Natural killer cell (primary cell): ENCODE measurements at regions of chr7 and their contacts with region 1.

Region 1: GRCh38 chr7:112449902-112450806 is at the start of gene IFRD1:
- DNase-seq: peak; percentile 97 to 99
- ATAC-seq: peak; percentile 81 to 94 (median 84)
- H3K4me3 ChIP-seq: peak within 1 kb of the TSS; percentile 90
- H3K4me3 Mint-ChIP-seq: peak within 1 kb of the TSS; percentile 99
- H3K27ac ChIP-seq: peak within 1 kb of the TSS; percentile 97
- H3K27ac Mint-ChIP-seq: peak within 1 kb of the TSS; percentile 99
- H3K4me1 ChIP-seq: peaks cover 17% of the 10 kb centered on the region
- H3K4me1 Mint-ChIP-seq: peaks cover 36 to 38% of the 10 kb centered on the region in 2 donors
- H3K27me3 ChIP-seq: no peaks in the 10 kb centered on the region
- H3K27me3 Mint-ChIP-seq: no peaks in the 10 kb centered on the region
- CTCF ChIP-seq: no peak
- total RNA-seq, gene IFRD1: 244 to 278 (median 261) TPM

Region 2: GRCh38 chr7:111561885-111562732 is 888.0 kb before region 1 on chr7 and contains the start of gene IMMP2L:
- intact Hi-C with region 1: loop called (anchors 5 kb)
- DNase-seq: peak; percentile 94 to 95
- ATAC-seq: peak; percentile 96 to 98 (median 96)
- H3K4me3 ChIP-seq: peak within 1 kb of the TSS; percentile 69
- H3K4me3 Mint-ChIP-seq: peak within 1 kb of the TSS; percentile 94
- H3K27ac ChIP-seq: peak within 1 kb of the TSS; percentile 80
- H3K27ac Mint-ChIP-seq: peak within 1 kb of the TSS; percentile 89 to 93
- H3K4me1 ChIP-seq: peaks cover 13% of the 10 kb centered on the region
- H3K4me1 Mint-ChIP-seq: peaks cover 5 to 23% of the 10 kb centered on the region in 2 donors
- H3K27me3 ChIP-seq: no peaks in the 10 kb centered on the region
- H3K27me3 Mint-ChIP-seq: peaks cover 11 to 23% of the 10 kb centered on the region in 2 donors
- CTCF ChIP-seq: peak; percentile 16
- total RNA-seq, gene IMMP2L: 6.9 to 9.2 (median 8.7) TPM

Region 3: DNA sequence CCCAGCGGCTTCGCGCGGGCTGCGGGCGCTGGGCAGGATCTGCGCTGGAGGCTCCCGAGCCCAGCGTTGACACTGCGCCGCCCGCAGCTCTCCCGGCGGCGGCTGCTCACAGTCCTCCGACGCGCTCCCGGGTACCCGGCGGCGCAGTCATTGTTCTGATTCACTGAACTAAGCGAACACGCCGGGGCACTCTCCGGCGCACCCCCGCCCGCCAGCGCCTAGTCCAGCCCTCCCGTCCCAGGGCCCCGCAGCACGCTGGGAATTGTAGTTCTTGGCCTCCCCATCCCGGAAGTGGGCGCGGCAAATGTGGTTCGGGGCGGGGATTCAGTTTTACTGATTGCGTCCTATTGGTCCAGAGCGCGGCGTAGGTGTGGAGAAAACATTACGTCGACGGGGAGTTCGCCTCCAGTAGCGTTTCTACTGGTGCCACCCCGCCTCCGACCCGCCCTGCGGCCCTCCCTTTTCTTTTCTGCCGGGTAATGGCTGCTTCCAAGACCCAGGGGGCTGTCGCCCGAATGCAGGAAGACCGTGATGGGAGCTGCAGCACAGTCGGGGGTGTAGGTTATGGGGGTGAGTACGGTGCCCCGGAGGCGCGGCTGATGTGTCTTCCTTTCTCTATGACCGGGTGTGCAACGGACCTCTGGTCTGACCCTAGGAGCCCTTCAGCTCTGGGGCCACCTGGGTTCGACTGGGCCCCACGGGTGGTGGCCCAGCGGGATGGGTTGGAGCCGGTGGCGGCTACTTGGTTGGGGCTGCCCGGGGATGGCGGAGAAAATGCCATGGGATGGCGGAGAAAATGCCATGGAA is 243.7 kb before region 1 on chr7 and contains the starts of genes DOCK4 and ZNF277:
- intact Hi-C with region 1: loop called (anchors 1 kb)
- DNase-seq: peak; percentile 99
- ATAC-seq: peak; percentile 88 to 95 (median 89)
- H3K4me3 ChIP-seq: peak within 1 kb of the TSS; percentile 83
- H3K4me3 Mint-ChIP-seq: peak within 1 kb of the TSS; percentile 99
- H3K27ac ChIP-seq: peak within 1 kb of the TSS; percentile 62
- H3K27ac Mint-ChIP-seq: peak within 1 kb of the TSS; percentile 93 to 99
- H3K4me1 ChIP-seq: peaks cover 21% of the 10 kb centered on the region
- H3K4me1 Mint-ChIP-seq: peaks cover 38 to 41% of the 10 kb centered on the region in 2 donors
- H3K27me3 ChIP-seq: peaks cover 33% of the 10 kb centered on the region
- H3K27me3 Mint-ChIP-seq: peaks cover 30 to 38% of the 10 kb centered on the region in 2 donors
- CTCF ChIP-seq: no peak
- total RNA-seq, gene DOCK4: 0.61 to 2.4 (median 0.89) TPM
- total RNA-seq, gene ZNF277: 13.0 to 20.8 (median 16.7) TPM

Region 4: GRCh38 chr7:112386619-112387018 is 63.5 kb before region 1 on chr7:
- intact Hi-C with region 1: loop called (anchors 1 kb)
- DNase-seq: no peak
- ATAC-seq: no peak
- H3K4me3 ChIP-seq: no peak overlapping the region
- H3K4me3 Mint-ChIP-seq: no peak overlapping the region
- H3K27ac ChIP-seq: no peak overlapping the region
- H3K27ac Mint-ChIP-seq: no peak overlapping the region
- H3K4me1 ChIP-seq: no peaks in the 10 kb centered on the region
- H3K4me1 Mint-ChIP-seq: peaks cover 0 to 12% of the 10 kb centered on the region in 2 donors
- H3K27me3 ChIP-seq: no peaks in the 10 kb centered on the region
- H3K27me3 Mint-ChIP-seq: peaks cover 0 to 7% of the 10 kb centered on the region in 2 donors
- CTCF ChIP-seq: no peak

Region 5: DNA sequence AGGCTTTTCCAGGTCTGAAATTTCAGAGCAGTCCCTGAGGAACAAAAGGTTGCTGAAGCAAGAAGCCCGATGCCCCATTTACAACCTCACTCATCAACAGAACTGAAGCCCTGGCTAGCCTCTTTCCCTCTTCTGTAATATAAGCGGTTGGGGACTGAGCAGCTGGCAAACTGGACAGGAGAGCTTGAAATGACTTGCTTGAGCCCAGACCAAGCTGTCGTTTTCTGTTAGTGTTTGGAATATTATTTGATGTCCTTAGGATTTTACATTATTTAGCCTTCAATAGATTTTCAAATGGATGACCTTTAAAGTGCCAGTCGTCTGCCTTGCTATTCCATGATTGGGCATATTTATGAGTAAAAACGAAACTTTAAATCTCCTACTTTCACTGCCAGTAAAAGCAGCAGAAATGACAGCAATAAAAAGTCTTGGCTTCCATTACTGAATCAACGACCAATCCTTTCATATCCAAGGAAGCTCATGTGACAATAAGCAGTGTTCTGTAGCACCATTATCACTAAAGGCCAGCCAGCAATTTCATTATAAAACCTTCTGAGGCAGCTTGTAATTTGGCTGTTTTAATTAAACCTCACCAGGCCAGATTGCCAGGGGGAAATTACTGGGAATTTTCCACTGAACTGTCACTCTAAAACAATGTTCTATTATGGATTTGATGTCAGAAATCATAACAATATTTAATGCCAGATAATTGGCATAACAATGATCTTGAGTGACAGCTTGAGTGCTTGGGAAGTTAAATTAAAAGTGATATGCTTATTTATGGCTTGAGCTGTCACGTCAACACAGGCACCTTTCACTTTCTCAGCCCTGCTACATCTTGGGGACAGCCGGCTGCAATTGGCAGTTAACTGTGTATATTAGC is 116.5 kb after region 1 on chr7:
- intact Hi-C with region 1: no loop called
- DNase-seq: no peak
- ATAC-seq: no peak
- H3K4me3 ChIP-seq: no peak overlapping the region
- H3K4me3 Mint-ChIP-seq: no peak overlapping the region
- H3K27ac ChIP-seq: no peak overlapping the region
- H3K27ac Mint-ChIP-seq: no peak overlapping the region
- H3K4me1 ChIP-seq: no peaks in the 10 kb centered on the region
- H3K4me1 Mint-ChIP-seq: no peaks in the 10 kb centered on the region
- H3K27me3 ChIP-seq: no peaks in the 10 kb centered on the region
- H3K27me3 Mint-ChIP-seq: peaks cover 0 to 5% of the 10 kb centered on the region in 2 donors
- CTCF ChIP-seq: no peak

Region 6: GRCh38 chr7:112789817-112790585 is 339.8 kb after region 1 on chr7 and contains the start of gene TMEM168:
- intact Hi-C with region 1: loop called (anchors 2 kb)
- DNase-seq: peak; percentile 80 to 91
- ATAC-seq: peak; percentile 85 to 90 (median 86)
- H3K4me3 ChIP-seq: peak within 1 kb of the TSS; percentile 94
- H3K4me3 Mint-ChIP-seq: peak within 1 kb of the TSS; percentile 96
- H3K27ac ChIP-seq: peak within 1 kb of the TSS; percentile 89
- H3K27ac Mint-ChIP-seq: peak within 1 kb of the TSS; percentile 89 to 91
- H3K4me1 ChIP-seq: peaks cover 9% of the 10 kb centered on the region
- H3K4me1 Mint-ChIP-seq: peaks cover 35% of the 10 kb centered on the region in 2 donors
- H3K27me3 ChIP-seq: no peaks in the 10 kb centered on the region
- H3K27me3 Mint-ChIP-seq: no peaks in the 10 kb centered on the region
- CTCF ChIP-seq: no peak
- total RNA-seq, gene TMEM168: 18.2 to 21.0 (median 20.0) TPM

Region 7: DNA sequence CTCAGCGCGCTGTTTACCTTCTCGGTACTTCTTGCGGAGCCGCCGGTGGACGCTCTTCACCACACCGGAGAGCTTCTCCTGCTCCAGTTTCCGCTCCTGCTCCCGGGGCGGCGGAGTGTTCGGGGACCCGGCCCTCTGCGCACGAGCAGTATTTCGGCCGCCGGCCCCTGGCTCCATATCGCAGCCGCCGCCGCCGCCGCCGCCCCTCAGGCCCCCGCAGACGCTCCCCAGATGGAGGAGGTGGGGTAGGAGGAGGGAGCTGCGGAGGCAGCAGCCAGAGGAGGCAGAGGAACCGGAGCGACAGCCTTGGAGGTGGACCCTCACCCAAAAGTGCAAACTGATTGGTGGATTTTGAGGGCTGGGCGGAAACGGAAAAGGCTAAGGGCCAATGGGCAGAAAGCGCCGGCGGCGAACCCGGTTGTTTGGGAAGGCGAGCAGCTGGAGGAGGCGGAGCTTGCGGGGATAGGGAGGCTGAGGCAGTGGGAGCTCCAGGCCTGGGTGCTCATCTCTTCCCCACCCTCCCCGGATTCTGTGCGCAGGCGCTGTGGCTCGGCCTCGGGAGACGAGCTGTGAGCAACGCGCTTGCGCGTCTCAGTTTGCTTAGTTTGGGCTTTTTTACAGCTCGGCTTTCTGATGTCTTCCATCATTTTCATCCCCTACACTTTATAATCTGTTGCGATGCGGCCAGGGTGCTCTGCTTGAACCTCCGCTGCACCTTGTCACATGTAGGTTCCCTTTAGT is 489.6 kb after region 1 on chr7:
- intact Hi-C with region 1: loop called (anchors 1 kb)
- DNase-seq: peak; percentile 97 to 100
- ATAC-seq: peak; percentile 94 to 99 (median 97)
- H3K4me3 ChIP-seq: peak overlapping the region; percentile 63
- H3K4me3 Mint-ChIP-seq: peak overlapping the region; percentile 89
- H3K27ac ChIP-seq: peak overlapping the region; percentile 71
- H3K27ac Mint-ChIP-seq: peak overlapping the region; percentile 85 to 89
- H3K4me1 ChIP-seq: peaks cover 15% of the 10 kb centered on the region
- H3K4me1 Mint-ChIP-seq: peaks cover 32 to 52% of the 10 kb centered on the region in 2 donors
- H3K27me3 ChIP-seq: peaks cover 5% of the 10 kb centered on the region
- H3K27me3 Mint-ChIP-seq: peaks cover 4 to 9% of the 10 kb centered on the region in 2 donors
- CTCF ChIP-seq: no peak

Region 8: GRCh38 chr7:113118074-113118959 is 668.2 kb after region 1 on chr7 and contains the start of gene SMIM30:
- intact Hi-C with region 1: loop called (anchors 2 kb)
- DNase-seq: peak; percentile 68 to 93
- ATAC-seq: peak; percentile 100
- H3K4me3 ChIP-seq: peak within 1 kb of the TSS; percentile 50
- H3K4me3 Mint-ChIP-seq: peak within 1 kb of the TSS; percentile 97
- H3K27ac ChIP-seq: peak within 1 kb of the TSS; percentile 67
- H3K27ac Mint-ChIP-seq: peak within 1 kb of the TSS; percentile 86 to 91
- H3K4me1 ChIP-seq: peaks cover 4% of the 10 kb centered on the region
- H3K4me1 Mint-ChIP-seq: peaks cover 12 to 15% of the 10 kb centered on the region in 2 donors
- H3K27me3 ChIP-seq: no peaks in the 10 kb centered on the region
- H3K27me3 Mint-ChIP-seq: peaks cover 6 to 21% of the 10 kb centered on the region in 2 donors
- CTCF ChIP-seq: no peak
- total RNA-seq, gene SMIM30: 5.5 to 7.6 (median 6.6) TPM